ENCODE measurements at regions of chr12 and their contacts with region 1.

Region 1: DNA sequence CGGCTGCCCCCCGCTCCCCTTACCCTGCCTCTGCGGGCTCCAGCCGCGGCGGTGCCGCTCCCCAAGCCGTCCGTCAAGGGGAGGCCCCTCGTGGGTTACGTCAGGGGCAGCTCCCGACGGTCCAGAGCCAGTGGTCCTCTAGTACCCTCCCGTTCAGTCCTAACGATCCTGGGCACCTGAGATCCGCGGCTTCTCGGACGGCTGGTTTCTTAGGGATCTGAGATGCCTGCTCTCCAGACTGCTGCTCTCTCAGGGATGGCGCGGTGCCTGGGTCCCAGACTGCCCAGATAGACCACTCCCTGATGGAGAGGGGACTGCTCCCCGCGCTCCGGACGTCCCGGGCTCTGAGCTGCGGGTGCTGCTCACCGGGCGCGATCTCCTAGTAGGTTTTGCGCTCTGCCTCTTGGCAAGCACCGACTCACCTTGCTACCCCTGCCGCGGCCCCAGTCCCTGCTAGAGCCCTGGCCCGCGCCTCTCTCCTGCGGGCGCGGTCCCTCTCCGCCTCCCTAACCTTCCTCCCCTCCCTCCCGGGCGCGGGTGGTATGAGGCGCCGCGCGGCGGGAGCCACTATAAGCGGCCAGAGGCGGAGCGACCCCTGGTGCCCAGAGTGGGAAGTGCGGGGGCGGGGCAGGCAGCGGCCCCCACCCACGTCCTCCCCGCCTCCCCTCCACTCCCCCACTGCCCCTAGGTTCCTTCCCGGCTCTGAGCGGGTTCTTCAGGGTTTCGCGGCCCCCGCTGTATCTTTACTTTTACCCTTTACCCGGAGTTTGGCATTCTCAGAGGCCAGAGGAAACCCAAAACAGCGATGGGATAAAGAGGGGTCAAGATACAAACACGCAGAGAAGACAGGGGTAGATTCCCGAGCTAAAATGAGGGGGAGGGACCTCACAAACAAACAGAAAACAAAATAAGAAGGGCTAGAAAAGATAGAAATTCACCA is at the start of gene C1QL4:
- DNase-seq: peak in 1 of 2 experiments; percentile 99
- H3K4me3 ChIP-seq: peak within 1 kb of the TSS; percentile 10 to 63 (median 34); a peak in 7 of 8 replicates
- H3K27ac ChIP-seq: no peak within 1 kb of the TSS
- H3K4me1 ChIP-seq: peaks cover 0 to 44% (median 26%) of the 10 kb centered on the region in 4 experiments; a peak in 6 of 7 replicates
- H3K27me3 ChIP-seq: peaks cover 76 to 100% (median 94%) of the 10 kb centered on the region in 4 experiments
- CTCF ChIP-seq: peak; percentile 67 to 92 (median 89)
- EP300 ChIP-seq: no peak
- POLR2A ChIP-seq: no peak
- RAD21 ChIP-seq: peak; percentile 22 to 49; a peak in 3 of 4 replicates
- total RNA-seq, gene C1QL4: 0.28 and 0.59 TPM in 2 replicates

Region 2: GRCh38 chr12:49288412-49288853 is 48.5 kb before region 1 on chr12:
- CTCF ChIA-PET with region 1: interaction called, 276 read pairs
- POLR2A ChIA-PET with region 1: interaction called, 26 read pairs
- DNase-seq: peak in 1 of 2 experiments; percentile 82
- H3K4me3 ChIP-seq: no peak overlapping the region
- H3K27ac ChIP-seq: no peak overlapping the region
- H3K4me1 ChIP-seq: peaks cover 0 to 9% (median 7%) of the 10 kb centered on the region in 4 experiments; a peak in 5 of 7 replicates
- H3K27me3 ChIP-seq: peaks cover 4 to 17% (median 16%) of the 10 kb centered on the region in 4 experiments
- CTCF ChIP-seq: peak in 2 of 3 experiments; percentile 79 to 87; a peak in 3 of 4 replicates
- EP300 ChIP-seq: no peak
- POLR2A ChIP-seq: no peak
- RAD21 ChIP-seq: peak; percentile 84 to 86

Region 3: GRCh38 chr12:49322708-49323523 is 14.0 kb before region 1 on chr12 and contains the start of gene TROAP:
- CTCF ChIA-PET with region 1: interaction called, 33 read pairs
- POLR2A ChIA-PET with region 1: interaction called, 37 read pairs
- DNase-seq: peak; percentile 94 to 95
- H3K4me3 ChIP-seq: peak within 1 kb of the TSS; percentile 87 to 96 (median 90)
- H3K27ac ChIP-seq: peak within 1 kb of the TSS; percentile 66
- H3K4me1 ChIP-seq: peaks cover 4 to 13% (median 6%) of the 10 kb centered on the region in 4 experiments; a peak in 6 of 7 replicates
- H3K27me3 ChIP-seq: no peaks in the 10 kb centered on the region
- CTCF ChIP-seq: no peak
- EP300 ChIP-seq: no peak
- POLR2A ChIP-seq: peak in 1 of 2 experiments; percentile 70; a peak in 2 of 3 replicates
- RAD21 ChIP-seq: no peak
- total RNA-seq, gene TROAP: 52.0 and 54.0 TPM in 2 replicates